ENCODE measurements at regions of chr15 and their contacts with region 1.

Region 1: DNA sequence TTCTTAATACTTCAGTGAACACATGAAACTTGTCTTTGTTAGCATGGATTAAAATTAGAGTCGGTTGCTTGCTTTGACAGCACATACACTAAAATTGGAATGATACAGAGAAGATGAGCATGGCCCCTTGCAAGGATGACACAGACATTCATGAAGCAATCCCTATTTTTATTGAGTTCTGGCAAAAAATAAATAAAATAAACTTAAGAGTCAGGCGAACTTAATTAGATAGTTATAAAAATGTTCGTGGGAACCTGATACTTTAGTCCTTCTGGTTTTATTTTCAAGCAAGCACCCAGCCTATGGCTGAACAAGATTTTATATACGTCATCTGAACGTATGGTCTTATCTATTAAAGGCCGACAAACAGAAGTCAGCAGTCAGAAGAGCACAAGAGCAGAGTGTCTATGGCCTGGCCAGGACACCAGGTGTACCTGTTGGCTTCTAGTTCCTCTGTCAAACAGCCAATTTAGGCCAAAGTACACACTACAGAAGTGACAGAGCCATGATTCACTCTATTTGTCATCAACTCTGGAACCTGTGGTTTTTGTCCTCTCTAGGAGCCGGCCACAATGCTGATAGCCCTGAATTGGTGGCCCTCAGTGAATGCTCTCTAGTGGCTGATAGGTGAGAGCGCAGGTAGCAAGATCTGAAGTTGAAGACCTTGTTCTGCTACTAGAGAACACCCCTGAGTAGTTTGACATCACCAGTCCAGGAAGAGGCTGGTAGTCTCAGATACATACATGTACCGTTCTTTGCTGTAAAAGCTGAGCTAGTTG is 64.3 kb downstream of the LEO1 start:
- DNase-seq: peak; percentile 96
- ATAC-seq: peak; percentile 98
- H3K4me3 ChIP-seq: no peak overlapping the region
- H3K27ac ChIP-seq: peak overlapping the region; percentile 44
- H3K4me1 ChIP-seq: peaks cover 31 to 32% of the 10 kb centered on the region in 2 experiments
- H3K27me3 ChIP-seq: no peaks in the 10 kb centered on the region
- CTCF ChIP-seq: peak; percentile 50 to 74 (median 66); a peak in 5 of 6 replicates
- POLR2A ChIP-seq: no peak
- RAD21 ChIP-seq: peak; percentile 66

Region 2: DNA sequence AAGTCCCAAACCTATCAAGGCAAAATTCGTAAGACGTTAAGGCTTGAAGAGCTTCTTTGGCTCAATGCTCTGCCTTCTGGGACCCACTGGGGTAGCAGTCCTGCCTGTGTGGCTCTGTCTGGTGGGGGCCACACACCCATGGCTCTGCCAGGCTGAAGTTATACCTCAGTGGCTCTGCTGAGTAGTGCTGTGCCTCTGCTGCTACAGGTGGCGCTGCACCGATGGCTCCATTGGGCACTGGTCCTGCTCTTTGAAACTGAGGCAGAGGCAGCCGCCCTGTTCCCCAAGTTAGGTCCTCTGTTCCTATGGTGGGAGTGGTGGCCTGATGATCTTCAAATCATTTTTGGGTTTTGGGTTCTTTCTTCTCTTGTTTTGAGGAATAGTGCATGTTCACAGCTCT is 1066.8 kb before region 1 on chr15:
- CTCF ChIA-PET with region 1: no interaction called
- POLR2A ChIA-PET with region 1: no interaction called
- RAD21 ChIA-PET with region 1: no interaction called
- intact Hi-C with region 1: no loop called
- DNase-seq: no peak
- ATAC-seq: peak; percentile 81
- H3K4me3 ChIP-seq: no peak overlapping the region
- H3K27ac ChIP-seq: no peak overlapping the region
- H3K4me1 ChIP-seq: no peaks in the 10 kb centered on the region
- H3K27me3 ChIP-seq: no peaks in the 10 kb centered on the region
- CTCF ChIP-seq: peak in 2 of 3 experiments; percentile 28 to 34; a peak in 2 of 6 replicates
- POLR2A ChIP-seq: no peak
- RAD21 ChIP-seq: no peak

Region 3: GRCh38 chr15:51801391-51801835 is 105.9 kb before region 1 on chr15:
- CTCF ChIA-PET with region 1: no interaction called
- POLR2A ChIA-PET with region 1: no interaction called
- RAD21 ChIA-PET with region 1: no interaction called
- intact Hi-C with region 1: loop called (anchors 5 kb)
- DNase-seq: peak; percentile 33
- ATAC-seq: peak; percentile 97
- H3K4me3 ChIP-seq: no peak overlapping the region
- H3K27ac ChIP-seq: no peak overlapping the region
- H3K4me1 ChIP-seq: peaks cover 4 to 11% of the 10 kb centered on the region in 2 experiments; a peak in 3 of 4 replicates
- H3K27me3 ChIP-seq: no peaks in the 10 kb centered on the region
- CTCF ChIP-seq: peak; percentile 29 to 96 (median 95); a peak in 5 of 6 replicates
- POLR2A ChIP-seq: no peak
- RAD21 ChIP-seq: peak; percentile 28; the same call in 1 of the 2 replicates

Region 4: GRCh38 chr15:51888593-51889195 is 18.6 kb before region 1 on chr15:
- CTCF ChIA-PET with region 1: interaction called, 22 read pairs
- POLR2A ChIA-PET with region 1: interaction called, 4 read pairs
- RAD21 ChIA-PET with region 1: no interaction called
- intact Hi-C with region 1: no loop called
- DNase-seq: no peak
- ATAC-seq: peak; percentile 47; the same call in 1 of the 2 replicates
- H3K4me3 ChIP-seq: no peak overlapping the region
- H3K27ac ChIP-seq: no peak overlapping the region
- H3K4me1 ChIP-seq: peaks cover 9 to 23% of the 10 kb centered on the region in 2 experiments; a peak in 3 of 4 replicates
- H3K27me3 ChIP-seq: no peaks in the 10 kb centered on the region
- CTCF ChIP-seq: peak; percentile 55 to 83 (median 69); a peak in 5 of 6 replicates
- POLR2A ChIP-seq: no peak
- RAD21 ChIP-seq: peak; percentile 59

Region 5: GRCh38 chr15:52071546-52071945 is 164.2 kb after region 1 on chr15:
- CTCF ChIA-PET with region 1: no interaction called
- POLR2A ChIA-PET with region 1: no interaction called
- RAD21 ChIA-PET with region 1: no interaction called
- intact Hi-C with region 1: no loop called
- DNase-seq: no peak
- ATAC-seq: no peak
- H3K4me3 ChIP-seq: no peak overlapping the region
- H3K27ac ChIP-seq: no peak overlapping the region
- H3K4me1 ChIP-seq: peaks cover 0 to 4% of the 10 kb centered on the region in 2 experiments; a peak in 2 of 4 replicates
- H3K27me3 ChIP-seq: no peaks in the 10 kb centered on the region
- CTCF ChIP-seq: no peak
- POLR2A ChIP-seq: no peak
- RAD21 ChIP-seq: no peak

Measured in HCT116 (cell line).